Ovary (tissue), 10 donors: ENCODE measurements at regions of chr11 and their contacts with region 1.

Region 1: DNA sequence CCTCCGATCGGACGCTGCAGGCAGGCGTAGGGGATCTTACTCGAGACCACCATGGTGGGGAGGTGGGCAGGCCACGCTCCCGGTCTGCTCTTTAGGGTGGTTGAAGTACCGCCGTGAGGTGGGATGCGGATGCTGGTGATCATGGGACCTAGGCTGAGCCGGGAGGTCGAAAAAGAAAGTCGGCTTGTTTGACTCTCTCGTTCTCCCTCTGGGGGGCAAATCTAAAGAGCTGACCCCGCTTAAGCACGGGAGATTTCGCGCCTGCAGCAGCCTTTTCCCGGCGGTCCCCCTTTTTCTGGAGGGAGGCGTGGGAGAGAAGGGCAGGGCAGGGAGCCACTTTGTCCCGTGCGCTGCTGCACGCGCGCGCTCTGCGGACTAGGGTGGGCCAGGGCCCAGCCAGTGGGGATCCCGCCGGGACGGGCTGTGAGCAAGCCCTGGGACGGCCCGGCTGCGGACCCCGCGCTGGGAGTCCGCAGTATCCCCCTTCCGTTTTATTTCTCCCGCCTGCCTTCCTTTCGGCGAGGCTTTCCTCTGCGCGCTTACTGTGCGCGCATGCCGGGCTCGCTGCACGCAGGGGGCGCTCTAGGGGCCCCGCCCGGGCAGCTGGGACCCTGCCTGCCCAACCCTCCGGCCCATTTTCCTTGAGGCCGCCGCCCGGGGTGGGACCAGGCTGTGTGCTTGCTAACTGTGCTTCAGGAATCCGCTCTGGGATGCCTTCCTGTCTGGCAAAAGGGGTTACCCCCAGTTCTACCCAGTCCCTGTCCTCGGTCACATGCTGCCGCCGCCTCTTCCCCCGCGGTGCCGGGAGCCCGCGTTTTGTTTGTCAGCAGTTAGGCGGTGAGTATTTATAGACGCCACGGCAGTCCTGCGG is 81.0 kb downstream of the PRR5L start:
- DNase-seq: peak; percentile 34 to 78 (median 58)
- H3K4me3 ChIP-seq: peak overlapping the region; percentile 54
- H3K27ac ChIP-seq: peak overlapping the region; percentile 5 to 23
- H3K4me1 ChIP-seq: peaks cover 6% of the 10 kb centered on the region
- H3K27me3 ChIP-seq: no peaks in the 10 kb centered on the region
- CTCF ChIP-seq: peak; percentile 24 to 67 (median 61)
- EP300 ChIP-seq: no peak
- POLR2A ChIP-seq: peak; percentile 13

Region 2: DNA sequence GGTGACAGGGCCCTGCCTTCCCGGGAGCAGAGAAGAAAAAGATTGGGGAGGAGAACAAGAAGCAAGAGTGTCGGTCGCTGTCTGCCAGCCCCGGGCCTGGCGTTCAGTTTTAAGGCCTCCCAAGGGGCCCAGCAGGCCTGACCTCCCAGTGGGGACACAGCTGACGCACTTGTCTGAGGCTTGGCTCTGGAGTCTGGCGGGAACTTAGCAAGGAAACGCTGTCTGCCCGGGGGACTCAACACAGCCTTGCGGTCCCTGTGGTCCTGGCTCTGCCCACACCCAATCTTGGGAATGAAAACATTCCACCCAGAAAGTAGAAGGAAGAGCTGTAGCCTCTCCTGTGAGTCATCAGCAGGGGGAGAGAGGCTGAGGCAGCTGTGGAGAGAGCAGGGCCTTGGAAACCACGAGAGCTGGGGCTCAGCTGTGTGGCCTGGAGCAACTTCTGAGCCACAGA is 78.6 kb after region 1 on chr11:
- intact Hi-C with region 1: loop called in 1 of 4 experiments (anchors 10 kb)
- DNase-seq: peak; percentile 66 to 81 (median 78)
- H3K4me3 ChIP-seq: no peak overlapping the region
- H3K27ac ChIP-seq: peak overlapping the region; percentile 63 to 73
- H3K4me1 ChIP-seq: peaks cover 22% of the 10 kb centered on the region
- H3K27me3 ChIP-seq: no peaks in the 10 kb centered on the region
- CTCF ChIP-seq: no peak
- EP300 ChIP-seq: peak; percentile 21
- POLR2A ChIP-seq: no peak